ENCODE measurements at regions of chr7 and their contacts with region 1.

Region 1: DNA sequence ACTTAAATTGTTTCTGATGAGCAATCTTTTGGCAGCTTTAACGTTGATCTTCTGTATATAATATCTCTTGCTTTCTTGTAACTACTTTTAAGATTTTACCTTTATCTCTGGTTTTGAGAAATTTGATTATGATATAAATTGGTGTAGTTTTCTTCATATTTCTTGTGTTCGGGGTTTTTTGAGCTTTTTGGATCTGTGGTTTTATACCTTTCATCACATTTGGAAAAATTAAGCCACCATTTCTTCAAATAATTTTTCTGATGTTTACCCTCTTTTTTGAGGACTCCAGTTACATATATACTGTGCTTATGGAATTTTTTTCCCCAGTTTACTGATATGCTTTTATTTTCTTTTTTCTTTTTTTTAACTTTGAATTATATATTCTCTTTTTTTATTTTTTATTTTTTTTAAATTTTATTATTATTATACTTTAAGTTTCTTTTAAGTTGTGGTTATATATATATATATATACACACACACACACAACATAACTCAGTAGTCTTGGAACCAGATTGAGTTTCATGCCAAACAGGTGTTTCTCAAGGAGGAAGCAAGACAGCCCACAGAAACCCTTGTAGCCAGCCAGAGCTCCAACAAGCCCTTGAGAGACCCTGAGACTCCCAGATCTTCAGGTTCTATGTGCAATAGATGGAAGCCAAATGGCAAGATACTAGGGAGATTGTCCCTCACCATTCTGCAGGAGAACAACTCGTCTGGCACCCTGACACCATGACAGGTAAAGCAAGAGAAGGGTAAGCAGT is 27.5 kb upstream of the NME8 start:
- DNase-seq: no peak
- ATAC-seq: peak; percentile 59
- H3K4me3 ChIP-seq: 0 out of 2 replicates have a peak overlapping the region, but pooled peaks have one; percentile 45
- H3K27ac ChIP-seq: peak overlapping the region; percentile 80
- H3K4me1 ChIP-seq: peaks cover 26% of the 10 kb centered on the region
- H3K27me3 ChIP-seq: no peaks in the 10 kb centered on the region
- CTCF ChIP-seq: no peak
- EP300 ChIP-seq: no peak
- POLR2A ChIP-seq: no peak
- RAD21 ChIP-seq: no peak

Region 2: GRCh38 chr7:37342688-37343471 is 478.0 kb before region 1 on chr7:
- CTCF ChIA-PET with region 1: no interaction called
- POLR2A ChIA-PET with region 1: interaction called, 4 read pairs
- RAD21 ChIA-PET with region 1: interaction called, 3 read pairs
- SMC1A ChIA-PET with region 1: interaction called, 3 read pairs
- in situ Hi-C with region 1: loop called (anchors 5 kb)
- intact Hi-C with region 1: no loop called
- DNase-seq: peak; percentile 69
- ATAC-seq: peak; percentile 70
- H3K4me3 ChIP-seq: peak overlapping the region; percentile 69
- H3K27ac ChIP-seq: peak overlapping the region; percentile 85
- H3K4me1 ChIP-seq: peaks cover 31% of the 10 kb centered on the region
- H3K27me3 ChIP-seq: no peaks in the 10 kb centered on the region
- CTCF ChIP-seq: peak; percentile 19 to 58 (median 41); a peak in 5 of 6 replicates
- EP300 ChIP-seq: no peak
- POLR2A ChIP-seq: peak; percentile 58; the same call in 1 of the 2 replicates
- RAD21 ChIP-seq: peak; percentile 57

Region 3: DNA sequence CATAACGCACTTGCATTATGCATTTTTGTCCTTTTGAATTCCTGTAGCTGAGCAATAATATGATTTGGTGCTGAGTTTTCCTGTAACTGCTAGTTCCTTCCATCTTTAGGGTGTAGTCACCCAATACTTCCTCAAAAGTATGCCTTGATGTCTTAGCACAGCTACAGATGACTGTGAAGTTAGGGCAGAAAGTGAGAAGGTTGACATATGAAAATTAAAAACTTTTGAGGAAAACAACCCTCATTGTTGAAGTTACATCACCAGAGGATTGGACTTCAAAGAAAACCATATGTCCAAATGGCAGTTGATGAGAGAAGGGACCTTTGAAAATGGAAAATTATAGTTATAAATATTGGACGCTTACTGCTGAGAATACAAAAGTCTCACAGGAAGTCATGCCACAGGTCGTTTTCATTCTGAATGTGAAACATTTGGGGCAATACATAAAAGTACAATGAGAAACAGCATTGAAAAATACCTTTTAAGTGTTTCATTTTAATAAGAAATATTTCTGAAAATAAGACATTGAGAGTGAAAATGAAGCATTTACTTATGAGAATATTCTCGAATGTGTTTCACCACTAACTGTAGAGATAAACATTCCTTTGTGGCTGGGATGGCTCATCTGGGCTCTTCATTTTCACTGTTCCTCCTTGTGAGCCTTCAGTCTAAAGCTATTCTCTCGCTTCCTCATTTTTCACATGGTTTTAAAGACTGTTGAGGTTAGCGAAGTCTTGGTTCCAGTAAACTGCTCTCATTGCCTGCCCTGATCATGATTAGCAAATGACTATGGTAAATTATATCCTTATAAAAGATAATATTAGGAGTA is 33.9 kb before region 1 on chr7:
- CTCF ChIA-PET with region 1: interaction called, 22 read pairs
- POLR2A ChIA-PET with region 1: interaction called, 20 read pairs
- RAD21 ChIA-PET with region 1: interaction called, 48 read pairs
- SMC1A ChIA-PET with region 1: interaction called, 193 read pairs
- in situ Hi-C with region 1: no loop called
- intact Hi-C with region 1: loop called (anchors 2 kb)
- DNase-seq: peak; percentile 91
- ATAC-seq: peak; percentile 92
- H3K4me3 ChIP-seq: peak overlapping the region; percentile 25; the same call in 1 of the 2 replicates
- H3K27ac ChIP-seq: peak overlapping the region; percentile 86
- H3K4me1 ChIP-seq: peaks cover 50% of the 10 kb centered on the region
- H3K27me3 ChIP-seq: no peaks in the 10 kb centered on the region
- CTCF ChIP-seq: no peak
- EP300 ChIP-seq: peak; percentile 83 to 89; a peak in 3 of 4 replicates
- POLR2A ChIP-seq: no peak
- RAD21 ChIP-seq: no peak

Region 4: GRCh38 chr7:37806152-37806551 is 14.7 kb before region 1 on chr7:
- CTCF ChIA-PET with region 1: interaction called, 4 read pairs
- POLR2A ChIA-PET with region 1: interaction called, 4 read pairs
- RAD21 ChIA-PET with region 1: interaction called, 5 read pairs
- SMC1A ChIA-PET with region 1: interaction called, 111 read pairs
- in situ Hi-C with region 1: no loop called
- intact Hi-C with region 1: no loop called
- DNase-seq: no peak
- ATAC-seq: peak; percentile 46; the same call in 1 of the 3 replicates
- H3K4me3 ChIP-seq: no peak overlapping the region
- H3K27ac ChIP-seq: no peak overlapping the region
- H3K4me1 ChIP-seq: 0 out of 2 replicates have a peak, but pooled peaks cover under 1% of the 10 kb centered on the region
- H3K27me3 ChIP-seq: no peaks in the 10 kb centered on the region
- CTCF ChIP-seq: no peak
- EP300 ChIP-seq: no peak
- POLR2A ChIP-seq: no peak
- RAD21 ChIP-seq: no peak

Measured in GM12878 (cell line).